Activated CD4-positive, alpha-beta T cell treated with anti-CD3 and anti-CD28 coated beads for 36 hours (primary cell): ENCODE measurements at regions of chr2 and their contacts with region 1.

Region 1: DNA sequence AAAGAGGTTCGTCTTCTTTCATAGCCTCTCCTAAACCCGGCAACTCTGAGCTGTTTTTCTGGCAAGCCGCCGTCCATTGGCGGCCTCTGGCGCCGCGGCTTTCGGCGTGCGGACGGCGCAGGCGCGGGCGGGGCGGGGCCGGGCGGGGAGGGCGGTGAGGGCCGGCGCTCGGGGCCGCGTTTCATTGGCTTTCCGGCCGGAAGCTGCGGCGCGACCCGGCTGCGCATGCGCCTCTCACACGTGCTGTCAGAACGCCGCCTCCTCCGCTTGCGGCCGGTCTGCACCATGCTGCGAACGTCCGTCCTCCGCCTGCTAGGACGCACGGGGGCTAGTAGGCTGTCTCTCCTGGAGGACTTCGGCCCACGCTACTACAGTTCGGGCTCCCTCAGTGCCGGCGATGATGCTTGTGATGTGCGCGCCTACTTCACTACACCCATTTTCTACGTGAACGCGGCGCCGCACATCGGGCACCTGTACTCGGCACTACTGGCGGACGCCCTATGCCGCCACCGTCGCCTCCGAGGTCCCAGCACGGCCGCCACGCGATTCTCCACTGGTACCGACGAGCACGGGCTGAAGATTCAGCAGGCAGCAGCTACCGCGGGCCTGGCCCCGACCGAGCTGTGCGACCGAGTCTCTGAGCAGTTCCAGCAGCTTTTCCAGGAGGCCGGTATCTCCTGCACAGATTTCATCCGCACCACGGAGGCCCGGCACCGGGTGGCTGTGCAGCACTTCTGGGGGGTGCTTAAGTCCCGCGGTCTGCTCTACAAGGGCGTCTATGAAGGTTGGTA is at the start of gene MARS2:
- DNase-seq: peak; percentile 96
- ATAC-seq: peak; percentile 79
- H3K4me3 Mint-ChIP-seq: peak within 1 kb of the TSS; percentile 80
- H3K27ac Mint-ChIP-seq: peak within 1 kb of the TSS; percentile 94
- H3K4me1 Mint-ChIP-seq: peaks cover 41% of the 10 kb centered on the region
- H3K27me3 Mint-ChIP-seq: peaks cover 2% of the 10 kb centered on the region
- total RNA-seq, gene MARS2: 9.2 to 12.1 TPM

Region 2: GRCh38 chr2:197191177-197191939 is 514.0 kb before region 1 on chr2:
- CTCF ChIA-PET with region 1: no interaction called
- POLR2A ChIA-PET with region 1: no interaction called
- intact Hi-C with region 1: loop called in 1 of 2 experiments (anchors 10 kb)
- DNase-seq: no peak
- ATAC-seq: peak; percentile 54
- H3K4me3 Mint-ChIP-seq: peak overlapping the region; percentile 33
- H3K27ac Mint-ChIP-seq: peak overlapping the region; percentile 59
- H3K4me1 Mint-ChIP-seq: peaks cover 79% of the 10 kb centered on the region
- H3K27me3 Mint-ChIP-seq: no peaks in the 10 kb centered on the region

Region 3: DNA sequence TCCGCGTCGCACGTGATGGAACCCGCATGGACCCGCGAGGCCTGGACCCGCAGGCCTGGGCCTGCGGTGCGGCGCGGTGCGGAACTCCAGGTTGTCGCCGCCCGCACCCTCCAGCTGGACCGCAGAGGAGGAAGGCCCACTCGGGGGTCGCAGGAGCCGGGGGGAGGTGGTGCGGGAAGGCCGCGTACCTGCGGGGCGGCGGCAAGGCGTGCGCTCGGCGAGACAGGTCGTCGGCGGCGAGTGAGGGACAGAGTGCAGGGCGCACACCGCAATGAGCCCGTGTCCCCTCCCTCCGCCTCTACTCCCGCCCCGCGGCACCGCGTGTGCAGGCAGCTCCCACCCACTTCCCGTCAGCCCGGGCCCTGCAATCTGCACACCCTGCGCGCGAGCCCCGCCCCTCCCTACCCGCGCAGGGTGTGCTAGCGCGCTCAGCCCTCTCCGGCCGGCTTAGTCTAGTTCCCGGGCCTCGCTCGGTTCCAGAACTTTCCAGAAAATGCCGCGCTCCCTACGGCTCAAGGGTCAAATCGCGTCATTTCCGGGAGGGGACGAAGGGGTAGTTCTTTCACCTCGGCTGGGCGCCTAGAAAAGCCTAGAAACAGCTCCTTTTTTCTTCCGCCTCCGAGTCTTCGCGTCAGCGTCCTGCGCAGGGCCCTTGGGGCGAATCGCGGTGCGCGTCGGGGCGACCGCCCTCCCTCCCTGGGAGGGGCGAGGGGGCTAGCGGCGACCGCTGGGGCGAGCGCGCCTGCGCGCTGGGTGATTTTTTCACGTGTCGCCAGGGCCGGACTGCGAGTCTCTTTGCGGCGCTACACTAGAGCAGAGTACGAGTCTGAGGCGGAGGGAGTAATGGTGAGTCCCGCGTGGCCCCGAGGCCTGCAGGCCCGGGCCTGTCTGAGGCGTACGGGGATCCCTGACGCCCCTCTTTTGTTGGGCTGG is 205.5 kb before region 1 on chr2 and contains the starts of genes HSPD1 and HSPE1:
- CTCF ChIA-PET with region 1: no interaction called
- POLR2A ChIA-PET with region 1: interaction called, 3 read pairs
- intact Hi-C with region 1: loop called (anchors 1 kb)
- DNase-seq: peak; percentile 99
- ATAC-seq: peak; percentile 88
- H3K4me3 Mint-ChIP-seq: peak within 1 kb of the TSS; percentile 92
- H3K27ac Mint-ChIP-seq: peak within 1 kb of the TSS; percentile 97
- H3K4me1 Mint-ChIP-seq: peaks cover 57% of the 10 kb centered on the region
- H3K27me3 Mint-ChIP-seq: no peaks in the 10 kb centered on the region
- total RNA-seq, gene HSPD1: 872 to 1,138 TPM
- total RNA-seq, gene HSPE1: 250 to 356 TPM

Region 4: GRCh38 chr2:197777823-197778407 is 72.6 kb after region 1 on chr2:
- CTCF ChIA-PET with region 1: interaction called, 31 read pairs
- POLR2A ChIA-PET with region 1: no interaction called
- intact Hi-C with region 1: loop called (anchors 1 kb)
- DNase-seq: peak; percentile 51
- ATAC-seq: no peak
- H3K4me3 Mint-ChIP-seq: no peak overlapping the region
- H3K27ac Mint-ChIP-seq: no peak overlapping the region
- H3K4me1 Mint-ChIP-seq: no peaks in the 10 kb centered on the region
- H3K27me3 Mint-ChIP-seq: peaks cover 6% of the 10 kb centered on the region

Region 5: DNA sequence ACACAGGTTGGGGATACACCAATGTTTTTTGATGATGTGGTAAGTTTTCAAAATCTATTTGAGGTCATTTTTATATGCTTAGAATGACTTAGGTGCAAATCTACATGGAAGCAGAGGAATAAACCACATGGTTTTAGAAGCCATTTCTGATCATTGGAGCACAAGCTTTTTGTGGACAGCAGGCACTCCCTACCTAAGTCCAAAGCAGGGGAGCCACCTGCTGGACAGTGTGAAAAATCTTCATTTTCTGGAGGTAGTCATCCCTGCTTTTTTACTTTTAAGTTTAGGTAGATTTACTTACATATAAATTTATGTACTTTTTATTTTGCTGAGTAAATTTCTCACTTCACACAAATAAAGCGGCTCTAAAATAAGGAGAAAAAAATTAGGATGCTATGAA is 422.3 kb after region 1 on chr2:
- CTCF ChIA-PET with region 1: no interaction called
- POLR2A ChIA-PET with region 1: no interaction called
- intact Hi-C with region 1: loop called (anchors 5 to 10 kb)
- DNase-seq: peak; percentile 71
- ATAC-seq: peak; percentile 72
- H3K4me3 Mint-ChIP-seq: no peak overlapping the region
- H3K27ac Mint-ChIP-seq: no peak overlapping the region
- H3K4me1 Mint-ChIP-seq: peaks cover 8% of the 10 kb centered on the region
- H3K27me3 Mint-ChIP-seq: no peaks in the 10 kb centered on the region